ENCODE measurements at regions of chr19 and their contacts with region 1.

Region 1: GRCh38 chr19:4172861-4173473 is 9.4 kb downstream of the SIRT6 start:
- DNase-seq: peak; percentile 54 to 81 (median 75)
- H3K4me3 ChIP-seq: no peak overlapping the region
- H3K27ac ChIP-seq: no peak overlapping the region
- H3K4me1 ChIP-seq: peaks cover 0 to 6% (median 2%) of the 10 kb centered on the region in 4 experiments
- H3K27me3 ChIP-seq: peaks cover 0 to 27% (median 9%) of the 10 kb centered on the region in 5 experiments

Region 2: GRCh38 chr19:4201798-4202197 is 28.8 kb after region 1 on chr19:
- CTCF ChIA-PET with region 1: interaction called, 16 read pairs
- POLR2A ChIA-PET with region 1: no interaction called
- DNase-seq: no peak
- H3K4me3 ChIP-seq: no peak overlapping the region
- H3K27ac ChIP-seq: no peak overlapping the region
- H3K4me1 ChIP-seq: peaks cover 0 to 3% (median 3%) of the 10 kb centered on the region in 4 experiments
- H3K27me3 ChIP-seq: peaks cover 4 to 43% (median 11%) of the 10 kb centered on the region in 5 experiments

Region 3: DNA sequence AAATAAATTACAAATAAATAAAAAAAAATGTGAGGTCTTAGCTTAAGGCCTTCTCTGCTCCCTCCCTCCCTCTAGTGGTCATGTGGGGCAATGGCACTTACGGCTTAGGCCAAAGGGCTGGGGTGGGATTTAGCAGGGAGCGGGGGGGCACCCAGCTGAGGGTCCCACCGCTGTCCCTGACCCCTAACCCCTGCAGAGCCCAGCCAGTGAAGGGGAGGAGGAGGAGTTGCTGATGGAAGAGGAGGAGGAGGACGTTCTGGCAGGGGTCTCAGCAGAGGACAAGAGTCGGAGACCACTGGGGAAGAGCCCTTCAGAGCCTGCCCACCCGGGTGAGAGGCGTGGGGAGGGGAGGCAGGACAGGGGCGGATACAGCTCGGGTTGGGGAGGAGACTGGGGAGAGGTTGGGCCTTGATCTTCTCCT is 179.7 kb after region 1 on chr19:
- CTCF ChIA-PET with region 1: no interaction called
- POLR2A ChIA-PET with region 1: no interaction called
- DNase-seq: peak; percentile 78 to 89 (median 80)
- H3K4me3 ChIP-seq: no peak overlapping the region
- H3K27ac ChIP-seq: no peak overlapping the region
- H3K4me1 ChIP-seq: peaks cover 0 to 2% (median under 1%) of the 10 kb centered on the region in 4 experiments
- H3K27me3 ChIP-seq: no peaks in the 10 kb centered on the region

Measured in common myeloid progenitor, CD34-positive (primary cell).